ENCODE measurements at regions of chr10 and their contacts with region 1.

Region 1: GRCh38 chr10:71270301-71271220 is 48.5 kb upstream of the SLC29A3 start:
- DNase-seq: peak; percentile 85
- H3K4me3 ChIP-seq: no peak overlapping the region
- H3K27ac ChIP-seq: no peak overlapping the region
- H3K4me1 ChIP-seq: peaks cover 22% of the 10 kb centered on the region
- H3K27me3 ChIP-seq: no peaks in the 10 kb centered on the region
- CTCF ChIP-seq: peak in 2 of 3 experiments; percentile 28 to 54
- POLR2A ChIP-seq: no peak

Region 2: DNA sequence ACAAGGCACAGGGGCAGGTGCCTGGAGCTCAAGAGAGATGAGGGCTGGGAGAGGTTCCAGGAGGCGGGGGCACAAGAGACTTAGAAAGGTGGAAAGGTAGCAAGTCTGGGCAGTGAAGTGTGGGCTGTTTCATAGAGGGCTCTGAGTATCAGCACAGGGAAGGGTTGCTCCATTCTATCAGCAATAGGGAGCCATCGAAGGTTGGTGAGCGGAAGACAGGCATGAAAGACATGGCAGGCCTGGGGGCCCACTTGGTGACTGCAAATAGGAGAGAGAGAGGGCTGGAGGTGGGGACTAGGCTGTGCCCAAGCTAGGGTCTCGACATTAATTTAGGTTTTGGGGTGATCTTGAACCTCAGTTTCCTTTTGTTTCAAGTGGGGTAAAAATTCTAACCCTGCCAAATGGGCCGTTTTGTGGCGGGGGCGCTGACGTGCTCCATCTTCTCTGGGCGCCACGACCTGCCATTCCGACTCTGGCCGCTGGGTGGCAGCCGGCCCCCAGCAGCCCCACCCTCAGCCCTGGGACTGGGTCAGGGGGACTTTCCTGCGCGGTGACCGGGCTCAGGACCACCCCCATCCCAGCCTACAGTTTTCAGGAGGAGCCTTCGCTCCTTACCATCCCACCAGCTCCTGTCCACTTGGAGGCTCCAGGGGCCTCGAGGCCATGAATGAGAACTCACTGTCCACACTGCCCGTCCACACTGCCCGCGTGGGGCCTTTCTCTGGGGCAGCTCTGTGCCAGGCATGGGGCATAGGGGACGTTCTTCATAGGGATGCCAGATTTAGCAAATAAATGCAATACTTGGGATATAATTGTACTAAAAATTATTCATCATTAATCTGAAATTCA is 345.0 kb before region 1 on chr10:
- intact Hi-C with region 1: loop called (anchors 10 kb)
- DNase-seq: peak; percentile 60
- H3K4me3 ChIP-seq: no peak overlapping the region
- H3K27ac ChIP-seq: no peak overlapping the region
- H3K4me1 ChIP-seq: no peaks in the 10 kb centered on the region
- H3K27me3 ChIP-seq: no peaks in the 10 kb centered on the region
- CTCF ChIP-seq: peak; percentile 82 to 92 (median 91)
- POLR2A ChIP-seq: no peak

Region 3: DNA sequence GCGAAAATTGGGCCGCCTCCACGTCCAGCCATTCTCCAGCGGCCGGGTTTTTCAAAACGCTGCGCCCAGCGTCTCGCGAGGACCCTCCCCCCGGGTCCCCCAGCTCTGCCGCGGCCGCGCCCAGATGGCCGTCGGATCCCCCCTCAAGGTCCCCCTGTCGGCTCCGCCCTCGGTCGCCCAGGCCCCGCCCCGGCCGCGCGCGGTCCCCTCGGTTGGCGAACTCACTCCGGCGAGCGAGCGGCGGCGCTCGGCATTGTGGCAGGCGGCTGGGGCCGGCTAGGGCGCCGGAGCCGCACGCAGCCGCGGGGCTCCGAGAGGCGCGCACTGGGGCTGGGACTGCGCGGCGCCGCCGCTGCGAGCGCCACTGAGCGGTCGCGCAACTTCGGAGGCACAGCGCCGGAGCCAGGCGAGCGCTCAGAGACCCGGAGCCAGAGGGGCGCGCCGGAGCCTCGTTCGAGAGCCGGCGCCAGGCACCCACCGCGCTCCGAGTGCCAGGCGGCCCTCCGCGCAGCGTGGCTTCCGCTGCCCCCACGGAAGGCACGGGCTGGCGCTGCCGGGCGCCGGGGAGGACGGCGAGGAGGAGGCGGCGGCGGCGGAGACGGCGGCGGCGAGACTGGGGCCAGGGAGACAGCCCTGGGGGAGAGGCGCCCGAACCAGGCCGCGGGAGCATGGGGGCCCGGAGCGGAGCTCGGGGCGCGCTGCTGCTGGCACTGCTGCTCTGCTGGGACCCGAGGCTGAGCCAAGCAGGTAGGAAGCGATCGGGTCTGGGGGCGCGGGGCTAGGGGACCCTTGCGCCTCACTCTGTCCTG is 58.0 kb before region 1 on chr10 and contains the start of gene UNC5B:
- intact Hi-C with region 1: loop called (anchors 10 kb)
- DNase-seq: peak; percentile 89
- H3K4me3 ChIP-seq: peak within 1 kb of the TSS; percentile 70 to 79
- H3K27ac ChIP-seq: peak within 1 kb of the TSS; percentile 40 to 81
- H3K4me1 ChIP-seq: peaks cover 25% of the 10 kb centered on the region
- H3K27me3 ChIP-seq: no peaks in the 10 kb centered on the region
- CTCF ChIP-seq: peak in 2 of 3 experiments; percentile 36 to 59
- POLR2A ChIP-seq: peak; percentile 50
- total RNA-seq, gene UNC5B: 24.4 to 44.4 TPM

Measured in testis (tissue), 5 donors.